ENCODE measurements at regions of chr6 and their contacts with region 1.

Region 1: DNA sequence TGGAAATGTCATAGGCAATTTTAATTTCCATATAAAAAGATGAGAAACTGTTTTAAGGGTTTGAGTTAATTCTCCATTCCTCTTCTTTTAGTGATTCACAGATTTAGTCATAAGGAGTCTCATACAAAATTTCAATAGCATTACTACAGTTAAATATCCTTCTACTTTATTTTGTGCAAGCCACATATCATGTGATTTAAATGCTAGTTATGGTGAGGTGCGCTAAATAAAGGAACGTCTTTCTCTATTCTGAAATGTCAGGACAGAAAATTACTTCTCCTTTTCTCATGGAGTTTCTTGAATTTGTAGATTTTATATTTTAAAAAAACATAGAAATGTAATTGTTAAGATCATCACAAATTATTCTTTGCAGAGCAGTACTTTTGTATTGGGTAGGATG is 50.0 kb upstream of the SUPT3H start:
- DNase-seq: no peak
- H3K4me3 Mint-ChIP-seq: peak overlapping the region; percentile 69
- H3K27ac Mint-ChIP-seq: peak overlapping the region; percentile 87
- H3K4me1 Mint-ChIP-seq: peaks cover 61% of the 10 kb centered on the region
- H3K27me3 Mint-ChIP-seq: no peaks in the 10 kb centered on the region

Region 2: DNA sequence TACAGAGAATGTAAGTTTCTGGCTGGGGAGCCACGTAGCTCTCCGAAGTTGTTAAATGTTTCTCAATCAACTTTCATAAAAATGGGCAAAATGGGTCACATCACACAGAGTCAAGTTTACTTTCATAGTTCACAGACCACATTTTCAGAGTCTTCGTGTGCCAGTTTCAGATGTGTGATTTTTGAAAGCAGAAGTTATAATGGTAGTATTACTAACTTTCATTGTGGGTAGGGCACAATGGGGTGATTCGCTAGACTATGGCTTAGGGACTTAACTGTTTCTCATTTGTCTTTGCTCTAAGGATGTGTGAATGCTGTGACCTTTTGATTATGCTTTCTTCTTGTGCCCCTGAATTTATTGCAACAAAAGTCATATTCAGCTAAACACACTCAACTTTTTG is 59.0 kb after region 1 on chr6:
- intact Hi-C with region 1: no loop called
- DNase-seq: no peak
- H3K4me3 Mint-ChIP-seq: peak overlapping the region; percentile 20
- H3K27ac Mint-ChIP-seq: peak overlapping the region; percentile 74
- H3K4me1 Mint-ChIP-seq: peaks cover 78% of the 10 kb centered on the region
- H3K27me3 Mint-ChIP-seq: no peaks in the 10 kb centered on the region

Region 3: GRCh38 chr6:45543298-45544235 is 115.8 kb after region 1 on chr6:
- intact Hi-C with region 1: loop called (anchors 5 kb)
- DNase-seq: no peak
- H3K4me3 Mint-ChIP-seq: no peak overlapping the region
- H3K27ac Mint-ChIP-seq: peak overlapping the region; percentile 24
- H3K4me1 Mint-ChIP-seq: peaks cover 68% of the 10 kb centered on the region
- H3K27me3 Mint-ChIP-seq: no peaks in the 10 kb centered on the region

Measured in activated T-helper 2 cell treated with anti-CD3 and anti-CD28 coated beads, Interferon-gamma antibody, Interleukin-2, Interleukin-4, amounts not matched to agents 10 μg/mL and 5 μg/mL and 100 μg/mL, durations not matched to agents 14 hours and 24 hours and 36 hours (primary cell).